Activated CD4-positive, alpha-beta T cell treated with anti-CD3 and anti-CD28 coated beads for 36 hours (primary cell): ENCODE measurements at regions of chr6 and their contacts with region 1.

Region 1: DNA sequence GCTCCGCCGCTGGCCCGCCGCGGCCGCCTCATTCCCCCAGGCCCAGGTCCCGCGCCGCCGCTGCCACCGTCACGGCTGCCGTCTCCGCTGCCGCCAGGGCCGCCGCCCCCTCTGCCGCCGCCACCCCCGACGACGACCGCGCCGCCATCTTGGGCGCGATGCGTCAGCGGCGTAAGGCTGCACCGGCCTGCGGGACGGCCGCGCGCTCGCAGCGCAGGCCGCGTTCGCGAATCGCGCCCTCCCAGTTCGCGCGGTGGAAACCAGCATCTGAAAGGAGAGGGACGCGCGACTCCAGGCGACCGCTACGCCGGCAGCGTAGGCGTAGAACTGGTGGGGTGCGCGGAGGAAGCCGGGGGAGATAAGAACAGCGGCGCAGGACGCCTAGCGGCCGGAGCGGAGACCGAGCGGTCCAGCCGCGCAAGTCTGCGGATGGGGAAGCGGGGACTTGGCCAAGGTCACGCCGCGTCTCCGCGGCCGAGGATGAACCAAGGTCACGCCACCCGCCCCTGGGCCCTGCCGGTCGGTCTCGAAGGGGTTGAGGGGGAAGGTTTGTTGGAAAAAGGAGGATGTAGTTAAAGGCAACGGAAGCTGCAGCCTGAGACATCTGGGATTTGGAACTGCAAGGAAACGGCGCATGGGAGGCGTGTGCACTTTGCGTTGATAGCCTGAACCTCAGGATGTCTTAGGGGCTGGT is at the start of gene NUDT3:
- DNase-seq: peak; percentile 96
- ATAC-seq: peak; percentile 92
- H3K4me3 Mint-ChIP-seq: no peak within 1 kb of the TSS
- H3K27ac Mint-ChIP-seq: peak within 1 kb of the TSS; percentile 95
- H3K4me1 Mint-ChIP-seq: peaks cover 21% of the 10 kb centered on the region
- H3K27me3 Mint-ChIP-seq: no peaks in the 10 kb centered on the region
- total RNA-seq, gene NUDT3: 13.3 to 13.6 TPM

Region 2: GRCh38 chr6:34161857-34162515 is 230.7 kb before region 1 on chr6:
- CTCF ChIA-PET with region 1: interaction called, 5 read pairs
- POLR2A ChIA-PET with region 1: no interaction called
- intact Hi-C with region 1: loop called in 1 of 2 experiments (anchors 2 kb)
- DNase-seq: no peak
- ATAC-seq: no peak
- H3K4me3 Mint-ChIP-seq: no peak overlapping the region
- H3K27ac Mint-ChIP-seq: no peak overlapping the region
- H3K4me1 Mint-ChIP-seq: no peaks in the 10 kb centered on the region
- H3K27me3 Mint-ChIP-seq: no peaks in the 10 kb centered on the region

Region 3: DNA sequence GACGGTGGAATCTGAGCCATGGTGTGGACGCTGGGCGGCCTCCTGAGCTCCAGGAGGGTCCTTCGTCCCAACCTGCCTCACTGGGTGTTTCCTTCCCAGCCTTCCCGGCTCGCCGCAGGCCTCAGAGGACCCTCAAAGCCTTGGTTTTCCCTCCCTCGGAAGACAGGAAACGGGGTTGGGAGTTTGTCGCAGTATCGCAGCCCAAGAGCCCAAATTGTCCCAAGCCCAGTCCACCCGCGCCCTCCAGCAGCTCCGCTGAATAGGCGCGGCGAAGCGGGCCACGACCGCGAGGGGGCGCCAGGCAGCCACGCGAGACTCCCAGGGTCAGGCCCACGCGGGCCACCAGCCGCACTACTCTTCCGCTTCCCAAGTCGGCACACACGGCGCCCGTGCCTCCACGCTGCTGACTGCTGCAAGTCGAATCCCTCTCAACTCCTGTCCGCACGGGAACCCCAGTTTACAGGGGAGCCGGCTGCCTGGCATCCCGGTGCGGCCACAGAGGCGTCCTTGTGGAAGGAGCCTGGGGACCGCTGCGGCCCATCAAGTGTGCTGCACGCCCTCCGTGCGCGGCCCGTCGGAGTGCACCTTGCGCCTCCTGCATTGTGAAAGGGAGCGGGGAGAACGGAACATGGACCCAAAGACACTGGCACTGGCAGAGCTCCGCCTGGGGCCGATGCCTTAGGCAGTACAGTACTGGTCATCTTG is 196.4 kb before region 1 on chr6:
- CTCF ChIA-PET with region 1: no interaction called
- POLR2A ChIA-PET with region 1: no interaction called
- intact Hi-C with region 1: loop called (anchors 1 kb)
- DNase-seq: peak; percentile 93
- ATAC-seq: peak; percentile 94
- H3K4me3 Mint-ChIP-seq: peak overlapping the region; percentile 73
- H3K27ac Mint-ChIP-seq: peak overlapping the region; percentile 80
- H3K4me1 Mint-ChIP-seq: peaks cover 11% of the 10 kb centered on the region
- H3K27me3 Mint-ChIP-seq: no peaks in the 10 kb centered on the region

Region 4: GRCh38 chr6:34248727-34249551 is 143.7 kb before region 1 on chr6 and contains the start of gene SMIM29:
- CTCF ChIA-PET with region 1: interaction called, 10 read pairs
- POLR2A ChIA-PET with region 1: no interaction called
- intact Hi-C with region 1: loop called (anchors 1 kb)
- DNase-seq: peak; percentile 99
- ATAC-seq: peak; percentile 83
- H3K4me3 Mint-ChIP-seq: peak within 1 kb of the TSS; percentile 76
- H3K27ac Mint-ChIP-seq: peak within 1 kb of the TSS; percentile 85
- H3K4me1 Mint-ChIP-seq: peaks cover 43% of the 10 kb centered on the region
- H3K27me3 Mint-ChIP-seq: no peaks in the 10 kb centered on the region
- total RNA-seq, gene SMIM29: 15.8 to 16.3 TPM

Region 5: GRCh38 chr6:34610819-34611477 is 218.3 kb after region 1 on chr6:
- CTCF ChIA-PET with region 1: no interaction called
- POLR2A ChIA-PET with region 1: no interaction called
- intact Hi-C with region 1: loop called in 1 of 2 experiments (anchors 2 kb)
- DNase-seq: no peak
- ATAC-seq: no peak
- H3K4me3 Mint-ChIP-seq: no peak overlapping the region
- H3K27ac Mint-ChIP-seq: no peak overlapping the region
- H3K4me1 Mint-ChIP-seq: peaks cover 8% of the 10 kb centered on the region
- H3K27me3 Mint-ChIP-seq: no peaks in the 10 kb centered on the region